Activated T-helper 1 cell treated with anti-CD3 and anti-CD28 coated beads, Interleukin-12 subunit alpha, Interleukin-12 subunit beta, Interleukin-2, Interleukin-4 antibody, amounts not matched to agents 30 ng/mL and 10 ng/mL and 1 ng/mL, durations not matched to agents 14 hours and 24 hours and 36 hours (primary cell): ENCODE measurements at regions of chr5 and their contacts with region 1.

Region 1: DNA sequence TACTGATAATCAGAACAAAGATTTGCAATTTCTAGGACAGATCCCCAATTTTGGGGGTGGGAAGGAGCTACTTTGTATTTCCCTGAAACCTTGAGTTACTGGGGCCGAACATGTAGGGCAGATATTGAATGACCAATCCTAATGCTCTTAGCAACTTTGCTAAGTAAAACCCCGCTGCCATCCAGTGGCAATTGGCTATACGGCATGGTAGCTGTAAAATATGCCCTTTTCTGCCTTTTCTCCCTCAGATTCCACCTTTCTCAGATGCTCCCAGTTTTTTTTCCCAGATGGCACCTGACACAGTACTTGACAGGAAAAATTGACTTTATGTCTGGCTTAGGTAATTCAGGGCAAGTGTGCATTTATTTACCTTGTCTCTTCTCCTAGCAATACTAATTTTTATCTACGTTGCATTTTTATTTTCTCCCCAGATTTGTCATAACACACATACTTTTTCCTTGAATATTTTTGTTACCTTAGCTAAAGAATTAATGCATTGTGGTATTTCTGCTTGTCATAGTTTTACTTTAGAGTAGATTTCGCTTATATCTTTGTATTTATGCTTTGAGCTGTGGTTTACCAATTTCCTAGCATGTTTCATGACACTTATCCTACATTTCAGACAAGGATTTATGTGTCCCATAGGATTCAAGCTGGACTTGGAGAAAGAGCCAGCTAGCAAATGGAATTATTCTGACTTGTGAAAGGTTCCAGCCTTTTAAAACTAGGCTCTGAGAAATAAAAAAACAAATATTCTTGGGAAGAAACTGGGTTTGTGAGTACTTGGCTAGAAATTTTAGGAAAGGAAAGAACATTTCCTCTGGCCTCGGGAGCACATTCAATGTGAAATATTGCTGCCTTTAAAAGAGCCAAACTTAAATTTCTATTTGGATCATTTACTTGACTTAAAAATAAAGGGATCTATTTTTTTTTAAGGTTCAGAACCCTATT is 37.4 kb downstream of the PIK3R1 start:
- DNase-seq: no peak
- H3K4me3 Mint-ChIP-seq: no peak overlapping the region
- H3K27ac Mint-ChIP-seq: no peak overlapping the region
- H3K4me1 Mint-ChIP-seq: peaks cover 89% of the 10 kb centered on the region
- H3K27me3 Mint-ChIP-seq: peaks cover 2% of the 10 kb centered on the region

Region 2: GRCh38 chr5:67375608-67376007 is 877.3 kb before region 1 on chr5:
- intact Hi-C with region 1: loop called (anchors 10 kb)
- DNase-seq: no peak
- H3K4me3 Mint-ChIP-seq: no peak overlapping the region
- H3K27ac Mint-ChIP-seq: no peak overlapping the region
- H3K4me1 Mint-ChIP-seq: no peaks in the 10 kb centered on the region
- H3K27me3 Mint-ChIP-seq: no peaks in the 10 kb centered on the region

Region 3: DNA sequence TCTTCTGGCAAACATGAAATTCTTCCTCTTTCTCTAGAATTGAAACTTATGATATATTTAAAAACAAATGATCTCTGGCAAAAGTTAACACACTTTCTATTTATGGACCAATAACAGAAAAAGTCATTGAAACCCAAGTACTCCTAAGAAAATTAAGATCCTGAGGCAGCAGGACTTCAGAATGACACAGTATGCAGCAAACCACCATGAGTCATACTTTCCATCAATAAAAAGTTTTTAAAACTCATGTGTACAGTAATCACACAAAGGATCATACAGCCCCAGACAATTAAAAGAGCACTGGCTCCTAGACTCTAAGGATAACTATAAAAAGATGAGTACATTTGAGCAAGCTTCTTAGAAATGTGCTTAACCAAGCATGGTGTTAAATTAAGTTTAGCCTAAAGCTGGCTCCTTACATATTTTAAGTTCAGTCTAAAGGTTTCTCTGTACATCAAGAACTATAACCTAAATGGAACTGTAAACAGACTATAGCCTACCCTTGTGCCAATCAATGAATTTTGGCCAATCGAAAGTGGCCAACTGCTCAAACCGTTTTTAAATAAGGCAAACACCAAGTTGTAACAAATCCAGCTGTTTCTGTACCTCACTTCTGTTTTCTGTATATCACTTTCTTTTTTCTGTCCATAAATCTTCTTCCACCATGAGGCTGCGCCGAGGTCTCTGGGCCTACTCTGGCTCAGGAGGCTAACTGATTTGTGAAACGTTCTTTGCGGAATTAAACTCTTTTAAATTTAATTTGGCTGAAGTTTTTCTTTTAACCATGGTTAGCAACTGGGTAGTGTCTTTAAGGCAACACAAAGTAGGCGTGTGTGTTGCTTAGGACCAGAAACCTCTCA is 269.5 kb before region 1 on chr5:
- intact Hi-C with region 1: loop called (anchors 5 kb)
- DNase-seq: no peak
- H3K4me3 Mint-ChIP-seq: no peak overlapping the region
- H3K27ac Mint-ChIP-seq: no peak overlapping the region
- H3K4me1 Mint-ChIP-seq: peaks cover 6% of the 10 kb centered on the region
- H3K27me3 Mint-ChIP-seq: no peaks in the 10 kb centered on the region

Region 4: DNA sequence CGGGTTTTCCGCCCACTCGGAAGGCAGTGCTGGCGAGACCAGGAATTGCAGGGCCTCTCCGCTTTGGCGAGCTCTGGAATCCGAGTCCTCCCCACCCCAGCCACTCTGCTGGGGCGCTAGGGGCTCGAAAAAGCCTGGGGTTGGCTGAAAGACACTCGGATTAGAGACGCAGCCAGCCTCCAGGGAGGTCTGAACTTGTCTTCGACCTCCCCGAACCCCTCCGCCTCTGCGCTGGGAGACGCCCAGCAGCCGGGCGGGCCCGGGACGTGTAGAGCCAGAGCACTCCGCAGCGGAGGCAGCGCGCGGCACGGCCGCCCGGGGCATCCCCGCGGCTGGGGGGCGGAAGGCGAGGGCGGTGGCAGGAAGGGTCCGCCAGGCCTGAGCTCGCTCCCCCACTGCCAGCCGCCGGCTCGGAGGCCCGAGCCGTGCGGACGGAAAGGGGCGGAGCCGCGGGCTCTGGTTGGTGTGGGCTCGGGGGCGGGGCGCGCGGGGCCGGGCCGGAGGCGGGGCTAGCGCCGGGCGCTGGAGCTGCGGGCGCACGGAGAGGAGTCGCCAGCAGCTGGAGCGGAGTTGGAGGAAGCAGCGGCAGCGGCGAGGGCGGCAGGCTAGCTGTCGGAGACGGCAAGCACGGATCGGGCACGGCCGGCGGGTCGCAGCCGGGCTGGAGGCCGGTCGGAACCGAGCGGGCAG is 37.6 kb before region 1 on chr5 and contains the start of gene PIK3R1:
- intact Hi-C with region 1: loop called (anchors 1 kb)
- DNase-seq: peak; percentile 88
- H3K4me3 Mint-ChIP-seq: peak within 1 kb of the TSS; percentile 91
- H3K27ac Mint-ChIP-seq: peak within 1 kb of the TSS; percentile 93
- H3K4me1 Mint-ChIP-seq: peaks cover 37% of the 10 kb centered on the region
- H3K27me3 Mint-ChIP-seq: no peaks in the 10 kb centered on the region
- total RNA-seq, gene PIK3R1: 43.3 and 46.2 TPM in 2 replicates